CD8-positive, alpha-beta T cell (primary cell): ENCODE measurements at regions of chr6 and their contacts with region 1.

Region 1: DNA sequence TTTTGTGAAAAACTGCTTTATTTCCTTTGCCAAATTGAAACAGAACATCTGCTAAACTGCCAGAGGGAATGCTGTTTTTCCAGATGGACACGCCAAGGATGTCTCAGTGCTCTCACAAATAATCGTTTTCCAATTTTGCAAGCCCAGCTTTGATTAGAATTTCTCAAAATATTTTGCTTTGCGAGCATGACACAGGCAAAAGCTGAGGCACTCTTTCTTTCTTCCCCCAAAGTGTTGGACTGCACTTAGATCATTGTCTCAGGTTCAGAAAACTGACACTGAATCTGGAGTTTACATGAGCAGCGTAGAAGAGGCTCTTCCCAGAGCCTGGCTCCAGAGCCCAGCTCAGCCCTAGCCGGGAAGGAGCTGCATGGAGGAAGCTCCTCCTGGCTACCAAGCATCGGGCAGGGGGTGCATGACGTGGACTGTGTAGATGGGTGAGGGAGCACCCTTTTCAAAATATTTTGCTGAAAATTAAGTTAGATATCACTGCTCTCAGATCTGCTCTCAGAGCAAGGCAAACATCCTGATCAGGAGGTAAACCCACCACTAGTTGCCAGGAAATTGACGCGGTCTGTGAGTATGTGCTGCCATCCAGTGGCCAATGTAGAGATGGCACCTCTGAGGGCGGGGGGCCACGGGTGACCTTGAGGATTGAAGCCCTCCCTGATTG is 107.5 kb downstream of the SLC22A3 start:
- DNase-seq: peak; percentile 47 to 84 (median 71)
- ATAC-seq: peak; percentile 99
- H3K4me3 ChIP-seq: no peak overlapping the region
- H3K4me3 Mint-ChIP-seq: no peak overlapping the region
- H3K27ac ChIP-seq: no peak overlapping the region
- H3K27ac Mint-ChIP-seq: no peak overlapping the region
- H3K4me1 ChIP-seq: peaks cover 19% of the 10 kb centered on the region
- H3K4me1 Mint-ChIP-seq: peaks cover 36% of the 10 kb centered on the region
- H3K27me3 ChIP-seq: peaks cover 0 to 5% of the 10 kb centered on the region in 2 experiments
- H3K27me3 Mint-ChIP-seq: peaks cover 36% of the 10 kb centered on the region
- CTCF ChIP-seq: peak; percentile 94

Region 2: GRCh38 chr6:158752613-158753012 is 1703.1 kb before region 1 on chr6:
- CTCF ChIA-PET with region 1: no interaction called
- POLR2A ChIA-PET with region 1: no interaction called
- intact Hi-C with region 1: no loop called
- DNase-seq: peak in 1 of 9 experiments; percentile 21
- ATAC-seq: no peak
- H3K4me3 ChIP-seq: no peak overlapping the region
- H3K4me3 Mint-ChIP-seq: no peak overlapping the region
- H3K27ac ChIP-seq: no peak overlapping the region
- H3K27ac Mint-ChIP-seq: no peak overlapping the region
- H3K4me1 ChIP-seq: no peaks in the 10 kb centered on the region
- H3K4me1 Mint-ChIP-seq: no peaks in the 10 kb centered on the region
- H3K27me3 ChIP-seq: no peaks in the 10 kb centered on the region
- H3K27me3 Mint-ChIP-seq: no peaks in the 10 kb centered on the region
- CTCF ChIP-seq: no peak

Region 3: GRCh38 chr6:159174263-159174969 is 1281.3 kb before region 1 on chr6:
- CTCF ChIA-PET with region 1: interaction called, 3 read pairs
- POLR2A ChIA-PET with region 1: no interaction called
- intact Hi-C with region 1: loop called (anchors 10 kb)
- DNase-seq: peak; percentile 34 to 72 (median 61)
- ATAC-seq: peak; percentile 75
- H3K4me3 ChIP-seq: no peak overlapping the region
- H3K4me3 Mint-ChIP-seq: peak overlapping the region; percentile 29
- H3K27ac ChIP-seq: no peak overlapping the region
- H3K27ac Mint-ChIP-seq: no peak overlapping the region
- H3K4me1 ChIP-seq: no peaks in the 10 kb centered on the region
- H3K4me1 Mint-ChIP-seq: peaks cover 11% of the 10 kb centered on the region
- H3K27me3 ChIP-seq: peaks cover 8 to 11% of the 10 kb centered on the region in 2 experiments
- H3K27me3 Mint-ChIP-seq: peaks cover 70% of the 10 kb centered on the region
- CTCF ChIP-seq: peak; percentile 83

Region 4: GRCh38 chr6:159720708-159721107 is 735.0 kb before region 1 on chr6:
- CTCF ChIA-PET with region 1: interaction called, 3 read pairs
- POLR2A ChIA-PET with region 1: no interaction called
- intact Hi-C with region 1: loop called in 1 of 2 experiments (anchors 1 kb)
- DNase-seq: peak in 5 of 9 experiments; percentile 33 to 84 (median 53)
- ATAC-seq: peak; percentile 74
- H3K4me3 ChIP-seq: no peak overlapping the region
- H3K4me3 Mint-ChIP-seq: no peak overlapping the region
- H3K27ac ChIP-seq: no peak overlapping the region
- H3K27ac Mint-ChIP-seq: no peak overlapping the region
- H3K4me1 ChIP-seq: peaks cover 6% of the 10 kb centered on the region
- H3K4me1 Mint-ChIP-seq: peaks cover 16% of the 10 kb centered on the region
- H3K27me3 ChIP-seq: no peaks in the 10 kb centered on the region
- H3K27me3 Mint-ChIP-seq: no peaks in the 10 kb centered on the region
- CTCF ChIP-seq: peak; percentile 65

Region 5: GRCh38 chr6:159862103-159862502 is 593.6 kb before region 1 on chr6:
- CTCF ChIA-PET with region 1: interaction called, 21 read pairs
- POLR2A ChIA-PET with region 1: interaction called, 3 read pairs
- intact Hi-C with region 1: loop called (anchors 1 to 2 kb)
- DNase-seq: peak in 2 of 9 experiments; percentile 42 to 70
- ATAC-seq: peak; percentile 69
- H3K4me3 ChIP-seq: no peak overlapping the region
- H3K4me3 Mint-ChIP-seq: peak overlapping the region; percentile 10
- H3K27ac ChIP-seq: no peak overlapping the region
- H3K27ac Mint-ChIP-seq: peak overlapping the region; percentile 64
- H3K4me1 ChIP-seq: peaks cover 27% of the 10 kb centered on the region
- H3K4me1 Mint-ChIP-seq: peaks cover 22% of the 10 kb centered on the region
- H3K27me3 ChIP-seq: no peaks in the 10 kb centered on the region
- H3K27me3 Mint-ChIP-seq: peaks cover 3% of the 10 kb centered on the region
- CTCF ChIP-seq: no peak

Region 6: DNA sequence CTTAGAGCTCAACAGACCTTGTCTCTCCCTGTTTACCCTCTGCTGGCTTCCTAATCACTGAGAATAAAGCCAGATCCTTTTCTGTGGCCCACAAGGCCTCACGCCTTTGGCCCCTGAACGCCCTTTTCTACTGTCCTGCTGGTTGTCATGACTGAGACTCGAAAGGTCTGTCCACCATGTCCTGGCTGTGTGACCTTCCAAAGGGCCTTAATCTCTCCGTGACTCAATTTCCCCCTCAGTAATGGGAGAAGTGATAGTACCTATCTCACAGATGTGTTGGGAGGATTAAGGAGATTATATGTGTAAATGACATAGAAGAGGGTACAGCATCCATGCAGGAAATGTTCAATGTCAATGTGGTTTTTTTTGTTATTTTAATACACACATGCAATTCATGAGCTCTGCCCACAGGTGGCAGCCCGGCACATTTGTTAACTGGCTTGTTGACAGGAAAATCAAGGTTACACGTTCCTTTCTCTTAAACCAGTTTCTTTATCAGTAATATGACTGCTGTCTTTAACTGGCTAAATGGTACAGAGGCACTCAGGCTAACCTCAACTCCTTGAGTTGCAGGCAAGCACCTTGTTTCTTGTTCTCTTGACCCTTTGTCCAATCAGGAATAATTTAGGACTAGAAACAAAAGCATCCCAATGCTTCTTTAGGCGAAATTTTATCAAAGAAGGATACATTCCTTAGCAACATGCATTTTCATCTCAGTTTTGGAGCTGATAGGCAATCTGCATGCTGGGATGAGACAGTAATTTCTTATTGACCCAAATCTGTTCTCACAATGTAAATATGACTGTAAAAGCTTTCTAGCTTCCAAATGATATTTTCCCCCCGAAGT is 317.5 kb before region 1 on chr6:
- CTCF ChIA-PET with region 1: interaction called, 51 read pairs
- POLR2A ChIA-PET with region 1: no interaction called
- intact Hi-C with region 1: loop called in 1 of 2 experiments (anchors 1 kb)
- DNase-seq: peak; percentile 36 to 74 (median 60)
- ATAC-seq: peak; percentile 75
- H3K4me3 ChIP-seq: no peak overlapping the region
- H3K4me3 Mint-ChIP-seq: no peak overlapping the region
- H3K27ac ChIP-seq: no peak overlapping the region
- H3K27ac Mint-ChIP-seq: no peak overlapping the region
- H3K4me1 ChIP-seq: no peaks in the 10 kb centered on the region
- H3K4me1 Mint-ChIP-seq: peaks cover 5% of the 10 kb centered on the region
- H3K27me3 ChIP-seq: no peaks in the 10 kb centered on the region
- H3K27me3 Mint-ChIP-seq: peaks cover 7% of the 10 kb centered on the region
- CTCF ChIP-seq: peak; percentile 69

Region 7: GRCh38 chr6:160207618-160208017 is 248.1 kb before region 1 on chr6:
- CTCF ChIA-PET with region 1: no interaction called
- POLR2A ChIA-PET with region 1: no interaction called
- intact Hi-C with region 1: no loop called
- DNase-seq: no peak
- ATAC-seq: no peak
- H3K4me3 ChIP-seq: no peak overlapping the region
- H3K4me3 Mint-ChIP-seq: no peak overlapping the region
- H3K27ac ChIP-seq: no peak overlapping the region
- H3K27ac Mint-ChIP-seq: no peak overlapping the region
- H3K4me1 ChIP-seq: no peaks in the 10 kb centered on the region
- H3K4me1 Mint-ChIP-seq: no peaks in the 10 kb centered on the region
- H3K27me3 ChIP-seq: no peaks in the 10 kb centered on the region
- H3K27me3 Mint-ChIP-seq: peaks cover 16% of the 10 kb centered on the region
- CTCF ChIP-seq: no peak